ENCODE measurements at regions of chrX and their contacts with region 1.

Region 1: DNA sequence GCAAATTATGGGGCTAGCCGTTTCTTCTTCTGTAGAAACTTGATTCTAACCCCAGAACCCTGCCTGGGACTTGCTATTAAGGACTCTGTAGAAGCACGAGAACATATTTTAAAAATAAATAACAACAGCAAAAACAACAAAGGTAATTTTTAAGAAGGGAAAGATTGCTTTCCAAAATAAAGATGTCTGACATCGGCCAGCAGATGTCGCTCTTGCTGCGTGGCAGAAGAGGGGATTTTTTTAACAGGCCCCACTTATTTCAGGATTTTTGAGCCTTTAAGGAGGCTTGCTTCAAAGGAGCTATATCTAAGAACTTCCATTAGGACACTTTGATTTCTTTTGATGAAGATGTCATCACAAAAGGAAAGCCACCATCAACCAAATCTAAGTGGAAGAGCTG is 62.8 kb upstream of the EGFL6 start:
- DNase-seq: peak in 1 of 3 donors; percentile 27
- ATAC-seq: peak in 2 of 4 donors; percentile 39 to 46
- H3K4me3 ChIP-seq: no peak overlapping the region
- H3K27ac ChIP-seq: no peak overlapping the region
- H3K4me1 ChIP-seq: no peaks in the 10 kb centered on the region
- H3K27me3 ChIP-seq: no peaks in the 10 kb centered on the region
- CTCF ChIP-seq: peak; percentile 80 to 86 (median 84)
- POLR2A ChIP-seq: no peak

Region 2: DNA sequence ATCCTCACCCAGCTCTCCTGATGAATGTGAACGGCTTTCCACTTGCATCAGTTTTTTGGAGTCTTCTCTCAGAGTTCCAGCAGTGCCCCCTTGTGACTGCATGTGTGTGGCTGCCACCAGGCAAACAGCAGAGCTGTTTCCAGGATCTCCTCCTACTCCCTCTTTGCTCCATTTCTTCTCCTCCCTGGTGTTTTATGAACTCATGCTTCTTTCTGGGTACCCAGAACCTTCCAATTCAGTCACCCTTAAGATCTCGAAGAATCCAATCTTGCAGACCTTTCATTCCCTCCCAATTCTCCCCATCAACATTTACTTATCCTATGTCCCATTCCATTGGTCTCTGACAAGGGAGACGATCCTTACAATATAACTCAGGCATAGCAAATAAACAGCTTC is 139.6 kb after region 1 on chrX:
- intact Hi-C with region 1: loop called (anchors 5 to 10 kb)
- DNase-seq: peak; percentile 48 to 61 (median 60)
- ATAC-seq: peak; percentile 76 to 96 (median 88)
- H3K4me3 ChIP-seq: no peak overlapping the region
- H3K27ac ChIP-seq: no peak overlapping the region
- H3K4me1 ChIP-seq: no peaks in the 10 kb centered on the region
- H3K27me3 ChIP-seq: no peaks in the 10 kb centered on the region
- CTCF ChIP-seq: peak; percentile 49 to 73 (median 64)
- POLR2A ChIP-seq: no peak

Measured in right lobe of liver (tissue), 6 donors.